Mammary epithelial cell (primary cell): ENCODE measurements at regions of chr1 and their contacts with region 1.

Region 1: GRCh38 chr1:229558571-229559335 is at the start of gene ABCB10:
- DNase-seq: peak; percentile 96
- H3K4me3 ChIP-seq: peak within 1 kb of the TSS; percentile 69 to 82 (median 81)
- H3K27ac ChIP-seq: peak within 1 kb of the TSS; percentile 36
- H3K4me1 ChIP-seq: peaks cover 12% of the 10 kb centered on the region
- H3K27me3 ChIP-seq: no peaks in the 10 kb centered on the region
- CTCF ChIP-seq: peak; percentile 63 to 91
- total RNA-seq, gene ABCB10: 20.2 to 22.7 TPM

Region 2: DNA sequence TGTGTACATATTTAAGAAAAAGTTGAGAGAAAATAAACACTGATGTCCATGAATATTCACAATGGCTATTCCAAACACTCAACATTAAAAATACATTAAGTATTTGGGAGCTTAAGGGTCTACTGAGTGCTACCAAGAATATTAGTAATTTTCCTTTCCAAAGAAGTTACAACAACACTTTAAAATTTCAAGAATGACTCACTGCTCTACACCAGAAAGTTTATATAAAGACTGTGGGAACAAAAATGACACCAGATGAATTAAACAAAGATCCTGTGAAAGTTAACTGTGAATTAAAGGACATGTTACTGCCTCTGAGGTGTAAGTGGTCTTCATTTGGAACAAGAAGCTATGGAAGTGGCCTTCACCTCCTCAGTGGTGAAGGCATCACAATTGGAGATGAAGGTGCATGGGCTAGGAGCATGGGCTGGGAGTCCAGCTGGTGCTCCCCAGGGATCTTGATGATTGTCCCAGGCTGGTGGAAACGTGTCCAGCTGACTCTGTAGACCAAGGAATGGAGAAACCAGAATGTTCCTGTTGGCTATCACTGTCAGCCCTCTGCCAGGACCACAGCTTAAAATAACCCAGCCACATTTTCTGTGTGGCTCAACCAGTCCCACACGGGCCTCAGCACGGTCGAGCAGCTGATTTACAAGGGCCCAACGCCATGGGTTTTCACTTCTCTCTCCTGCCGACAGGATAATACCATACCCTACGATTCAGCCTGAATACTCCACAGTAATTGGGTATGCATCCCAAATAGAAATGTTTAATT is 38.4 kb after region 1 on chr1:
- CTCF ChIA-PET with region 1: no interaction called
- dilution Hi-C with region 1: loop called (anchors 5 kb)
- in situ Hi-C with region 1: no loop called
- intact Hi-C with region 1: no loop called
- DNase-seq: no peak
- H3K4me3 ChIP-seq: no peak overlapping the region
- H3K27ac ChIP-seq: no peak overlapping the region
- H3K4me1 ChIP-seq: no peaks in the 10 kb centered on the region
- H3K27me3 ChIP-seq: no peaks in the 10 kb centered on the region
- CTCF ChIP-seq: no peak

Region 3: DNA sequence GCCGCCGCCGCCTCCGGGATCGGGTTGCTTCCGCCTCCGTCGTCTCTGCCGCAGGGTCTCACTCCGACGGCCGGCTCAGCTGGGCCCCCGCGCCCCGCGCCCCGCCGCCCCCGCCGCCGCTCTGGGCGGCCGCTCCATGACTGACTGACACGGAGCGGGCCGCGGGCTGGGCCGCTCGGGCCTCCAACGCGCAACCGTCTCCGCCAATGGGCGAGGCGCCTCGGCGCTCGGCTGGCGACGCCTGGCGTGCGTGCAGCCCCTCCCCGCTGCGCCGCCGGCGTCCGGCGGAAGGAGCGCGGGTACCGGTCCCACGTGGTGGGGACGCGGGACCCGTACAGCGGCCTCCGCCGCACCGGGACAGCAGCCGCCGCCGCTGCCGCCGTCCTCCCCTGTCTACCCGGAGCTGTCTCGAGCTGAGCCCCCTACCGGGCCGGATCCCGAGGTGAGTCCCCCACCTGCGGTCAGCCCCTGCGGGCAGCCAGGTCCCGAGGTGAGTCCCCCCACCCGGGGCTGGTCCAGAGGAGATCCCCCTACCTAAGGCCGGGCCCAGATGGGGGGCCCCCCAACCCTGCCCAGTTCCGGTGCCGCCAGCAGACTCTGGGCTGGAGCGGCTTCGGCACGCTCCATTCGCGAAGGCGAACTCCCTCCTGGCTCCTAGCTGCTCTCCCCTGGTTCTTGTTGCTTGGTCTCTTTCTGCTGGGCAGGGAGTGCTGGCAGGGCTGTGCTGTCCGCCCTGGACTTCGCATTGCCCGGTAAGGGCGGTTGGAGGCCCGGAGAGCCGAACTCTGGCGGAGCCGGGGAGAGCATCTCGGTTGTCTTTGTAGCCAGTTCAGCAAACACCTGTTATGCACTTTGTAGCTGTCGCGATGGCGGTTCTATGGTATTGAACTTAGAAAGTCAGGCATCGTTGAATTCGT is 67.4 kb after region 1 on chr1 and contains the starts of genes TAF5L and URB2:
- CTCF ChIA-PET with region 1: no interaction called
- dilution Hi-C with region 1: loop called (anchors 5 kb)
- in situ Hi-C with region 1: no loop called
- intact Hi-C with region 1: loop called (anchors 1 kb)
- DNase-seq: peak; percentile 90
- H3K4me3 ChIP-seq: peak within 1 kb of the TSS; percentile 92 to 98 (median 93)
- H3K27ac ChIP-seq: peak within 1 kb of the TSS; percentile 42
- H3K4me1 ChIP-seq: peaks cover 21% of the 10 kb centered on the region
- H3K27me3 ChIP-seq: no peaks in the 10 kb centered on the region
- CTCF ChIP-seq: no peak
- total RNA-seq, gene TAF5L: 20.8 to 21.0 TPM
- total RNA-seq, gene URB2: 13.3 to 15.4 TPM